ENCODE measurements at regions of chr7 and their contacts with region 1.

Region 1: DNA sequence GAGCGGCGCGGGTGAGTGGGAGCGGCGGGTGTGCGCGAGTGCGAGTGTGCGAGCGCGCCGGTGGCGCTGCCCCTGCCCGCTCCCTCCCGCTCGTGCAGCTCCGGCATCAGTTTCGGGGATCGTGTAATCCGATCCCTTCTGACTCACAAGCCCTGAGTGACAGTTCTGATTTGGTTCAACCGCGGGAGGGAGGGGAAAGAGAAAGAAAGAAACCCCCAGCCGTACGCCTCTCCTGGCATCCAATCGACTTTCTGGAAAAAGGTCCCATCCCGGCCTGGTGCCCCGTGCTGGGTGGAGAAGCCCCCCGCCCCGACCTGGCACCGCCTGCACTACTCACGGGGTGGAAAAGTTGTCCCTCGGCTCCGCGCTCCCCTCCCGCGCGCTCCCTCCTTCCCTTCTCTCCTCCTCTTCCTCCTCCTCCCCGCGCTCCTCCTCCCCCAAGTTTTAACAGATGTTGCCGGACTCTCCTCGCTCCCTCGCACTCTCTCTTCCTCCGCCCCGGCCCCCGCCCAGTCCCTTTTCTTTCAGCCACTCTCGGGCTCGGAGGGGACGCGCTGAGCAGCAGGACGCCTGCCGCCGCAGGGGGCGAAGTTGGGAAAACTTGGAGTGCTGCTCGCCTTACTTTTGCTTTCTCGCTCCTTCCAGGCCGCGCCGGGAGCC is at the start of gene GLI3:
- DNase-seq: peak; percentile 96
- H3K4me3 ChIP-seq: peak within 1 kb of the TSS; percentile 79 to 93 (median 86)
- H3K27ac ChIP-seq: peak within 1 kb of the TSS; percentile 93 to 95 (median 94)
- H3K4me1 ChIP-seq: peaks cover 13 to 59% (median 54%) of the 10 kb centered on the region in 4 donors
- H3K27me3 ChIP-seq: no peaks in the 10 kb centered on the region
- CTCF ChIP-seq: peak in 2 of 3 experiments; percentile 12 to 48
- EP300 ChIP-seq: no peak
- POLR2A ChIP-seq: no peak
- total RNA-seq, gene GLI3: 11.7 to 17.8 (median 13.3) TPM

Region 2: DNA sequence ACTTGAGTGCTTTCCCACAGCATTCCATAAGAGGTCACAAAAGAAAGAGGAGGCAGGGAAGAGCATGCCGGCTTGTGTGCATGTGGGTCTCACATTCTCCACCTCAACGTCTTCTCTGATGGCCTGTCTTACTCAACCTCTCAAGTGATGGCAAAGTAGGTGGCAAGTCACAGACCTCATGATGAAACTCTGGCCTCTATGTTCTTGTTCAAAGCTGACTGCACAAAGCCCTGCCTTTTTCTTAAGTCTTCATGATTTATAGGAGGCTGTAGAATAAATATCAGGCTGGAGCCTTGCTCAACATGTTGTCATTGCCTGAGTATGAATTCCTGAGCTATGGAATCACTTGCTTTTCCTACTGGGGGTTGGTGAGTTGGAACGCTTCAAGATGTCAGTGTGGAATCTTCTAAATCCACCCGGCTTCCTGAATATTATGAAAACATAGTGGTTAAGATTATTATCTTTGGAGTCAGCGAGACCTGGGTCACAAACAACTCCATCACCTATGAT is 320.8 kb before region 1 on chr7:
- intact Hi-C with region 1: no loop called
- DNase-seq: no peak
- H3K4me3 ChIP-seq: no peak overlapping the region
- H3K27ac ChIP-seq: peak overlapping the region; percentile 46 to 77 (median 60)
- H3K4me1 ChIP-seq: peaks cover 0 to 34% (median 20%) of the 10 kb centered on the region in 4 donors
- H3K27me3 ChIP-seq: no peaks in the 10 kb centered on the region
- CTCF ChIP-seq: no peak
- EP300 ChIP-seq: no peak
- POLR2A ChIP-seq: no peak

Region 3: GRCh38 chr7:42493436-42494238 is 256.3 kb after region 1 on chr7:
- intact Hi-C with region 1: loop called (anchors 10 kb)
- DNase-seq: peak; percentile 96
- H3K4me3 ChIP-seq: peak overlapping the region; percentile 56 to 71 (median 56)
- H3K27ac ChIP-seq: peak overlapping the region; percentile 78 to 90 (median 82)
- H3K4me1 ChIP-seq: peaks cover 14 to 45% (median 41%) of the 10 kb centered on the region in 4 donors
- H3K27me3 ChIP-seq: no peaks in the 10 kb centered on the region
- CTCF ChIP-seq: peak in 1 of 3 experiments; percentile 17
- EP300 ChIP-seq: peak; percentile 92
- POLR2A ChIP-seq: no peak

Region 4: DNA sequence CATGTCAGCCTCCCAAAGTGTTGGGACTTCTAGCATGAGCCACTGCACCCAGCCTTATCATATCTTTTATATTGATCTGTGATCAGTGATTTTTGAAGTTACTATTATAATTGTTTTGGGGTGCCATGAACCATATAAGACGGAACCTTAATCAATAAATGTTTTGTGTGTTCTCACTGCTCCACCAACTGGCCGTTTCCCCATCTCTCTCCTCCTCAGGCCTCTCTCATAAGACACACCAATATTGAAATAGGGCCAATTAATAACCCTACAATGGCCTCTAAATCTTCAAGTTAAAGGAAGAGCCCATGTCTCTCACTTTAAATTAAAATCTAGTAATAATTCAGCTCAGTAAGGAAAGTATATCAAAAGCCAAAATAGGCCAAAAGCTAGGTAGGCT is 299.8 kb after region 1 on chr7:
- intact Hi-C with region 1: no loop called
- DNase-seq: no peak
- H3K4me3 ChIP-seq: no peak overlapping the region
- H3K27ac ChIP-seq: no peak overlapping the region
- H3K4me1 ChIP-seq: no peaks in the 10 kb centered on the region
- H3K27me3 ChIP-seq: no peaks in the 10 kb centered on the region
- CTCF ChIP-seq: no peak
- EP300 ChIP-seq: no peak
- POLR2A ChIP-seq: no peak

Region 5: GRCh38 chr7:42574685-42575084 is 337.4 kb after region 1 on chr7:
- intact Hi-C with region 1: loop called (anchors 5 kb)
- DNase-seq: no peak
- H3K4me3 ChIP-seq: no peak overlapping the region
- H3K27ac ChIP-seq: peak overlapping the region in 3 of 4 donors; percentile 13 to 49 (median 20)
- H3K4me1 ChIP-seq: peaks cover 0 to 57% (median 54%) of the 10 kb centered on the region in 4 donors
- H3K27me3 ChIP-seq: no peaks in the 10 kb centered on the region
- CTCF ChIP-seq: peak; percentile 13 to 31 (median 17)
- EP300 ChIP-seq: no peak
- POLR2A ChIP-seq: no peak

Region 6: GRCh38 chr7:42677751-42678699 is 440.7 kb after region 1 on chr7:
- intact Hi-C with region 1: loop called (anchors 5 kb)
- DNase-seq: no peak
- H3K4me3 ChIP-seq: no peak overlapping the region
- H3K27ac ChIP-seq: peak overlapping the region; percentile 18 to 78 (median 56)
- H3K4me1 ChIP-seq: peaks cover 0 to 30% (median 26%) of the 10 kb centered on the region in 4 donors
- H3K27me3 ChIP-seq: no peaks in the 10 kb centered on the region
- CTCF ChIP-seq: no peak
- EP300 ChIP-seq: no peak
- POLR2A ChIP-seq: no peak

Measured in esophagus muscularis mucosa (tissue), 4 donors.